Activated CD8-positive, alpha-beta T cell treated with anti-CD3 and anti-CD28 coated beads, Interleukin-2, amount 10 ng/mL, durations not matched to agents 7 days and 5 days (primary cell): ENCODE measurements at regions of chr19 and their contacts with region 1.

Region 1: DNA sequence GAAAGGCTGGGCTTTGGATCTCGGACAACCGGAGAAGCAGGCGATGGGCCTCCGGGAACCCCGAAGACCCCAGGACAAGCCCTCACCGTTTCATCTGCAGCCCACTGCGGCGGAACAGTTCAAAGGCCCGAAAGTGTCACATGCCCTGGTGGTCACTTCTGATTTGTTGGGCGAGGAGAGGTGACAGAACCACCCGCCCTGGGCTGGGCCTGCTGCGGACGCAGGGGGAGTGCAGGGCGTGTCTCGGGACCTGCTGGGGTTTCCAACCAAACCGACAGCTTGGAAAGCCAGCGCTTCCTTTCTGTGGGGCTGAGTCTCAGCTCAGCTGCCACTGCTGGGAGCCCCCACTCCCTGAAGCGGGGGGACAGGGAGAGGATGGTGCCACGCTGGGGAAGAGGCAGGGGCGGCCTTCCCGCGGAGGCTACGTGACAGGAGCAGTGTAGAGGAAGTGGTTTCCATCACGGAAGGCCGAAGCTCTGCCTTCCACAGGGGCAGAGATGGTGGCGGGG is 22.8 kb upstream of the ZBTB7A start:
- DNase-seq: peak; percentile 89
- ATAC-seq: peak; percentile 77
- H3K4me3 Mint-ChIP-seq: peak overlapping the region; percentile 73
- H3K27ac Mint-ChIP-seq: peak overlapping the region; percentile 96
- H3K4me1 Mint-ChIP-seq: peaks cover 72% of the 10 kb centered on the region
- H3K27me3 Mint-ChIP-seq: no peaks in the 10 kb centered on the region

Region 2: GRCh38 chr19:4077882-4078614 is 11.4 kb before region 1 on chr19:
- CTCF ChIA-PET with region 1: interaction called, 5 read pairs
- POLR2A ChIA-PET with region 1: interaction called, 10 read pairs
- DNase-seq: peak; percentile 72
- ATAC-seq: peak; percentile 71
- H3K4me3 Mint-ChIP-seq: peak overlapping the region; percentile 68
- H3K27ac Mint-ChIP-seq: peak overlapping the region; percentile 93
- H3K4me1 Mint-ChIP-seq: peaks cover 63% of the 10 kb centered on the region
- H3K27me3 Mint-ChIP-seq: no peaks in the 10 kb centered on the region

Region 3: GRCh38 chr19:4103073-4103418 is 13.6 kb after region 1 on chr19:
- CTCF ChIA-PET with region 1: interaction called, 14 read pairs
- POLR2A ChIA-PET with region 1: interaction called, 32 read pairs
- DNase-seq: no peak
- ATAC-seq: no peak
- H3K4me3 Mint-ChIP-seq: no peak overlapping the region
- H3K27ac Mint-ChIP-seq: peak overlapping the region; percentile 99
- H3K4me1 Mint-ChIP-seq: peaks cover 48% of the 10 kb centered on the region
- H3K27me3 Mint-ChIP-seq: no peaks in the 10 kb centered on the region

Region 4: GRCh38 chr19:4108767-4109625 is 19.5 kb after region 1 on chr19:
- CTCF ChIA-PET with region 1: interaction called, 14 read pairs
- POLR2A ChIA-PET with region 1: interaction called, 32 read pairs
- DNase-seq: peak; percentile 93
- ATAC-seq: peak; percentile 68
- H3K4me3 Mint-ChIP-seq: peak overlapping the region; percentile 48
- H3K27ac Mint-ChIP-seq: peak overlapping the region; percentile 97
- H3K4me1 Mint-ChIP-seq: peaks cover 84% of the 10 kb centered on the region
- H3K27me3 Mint-ChIP-seq: no peaks in the 10 kb centered on the region